ENCODE measurements at regions of chr1 and their contacts with region 1.

Region 1: DNA sequence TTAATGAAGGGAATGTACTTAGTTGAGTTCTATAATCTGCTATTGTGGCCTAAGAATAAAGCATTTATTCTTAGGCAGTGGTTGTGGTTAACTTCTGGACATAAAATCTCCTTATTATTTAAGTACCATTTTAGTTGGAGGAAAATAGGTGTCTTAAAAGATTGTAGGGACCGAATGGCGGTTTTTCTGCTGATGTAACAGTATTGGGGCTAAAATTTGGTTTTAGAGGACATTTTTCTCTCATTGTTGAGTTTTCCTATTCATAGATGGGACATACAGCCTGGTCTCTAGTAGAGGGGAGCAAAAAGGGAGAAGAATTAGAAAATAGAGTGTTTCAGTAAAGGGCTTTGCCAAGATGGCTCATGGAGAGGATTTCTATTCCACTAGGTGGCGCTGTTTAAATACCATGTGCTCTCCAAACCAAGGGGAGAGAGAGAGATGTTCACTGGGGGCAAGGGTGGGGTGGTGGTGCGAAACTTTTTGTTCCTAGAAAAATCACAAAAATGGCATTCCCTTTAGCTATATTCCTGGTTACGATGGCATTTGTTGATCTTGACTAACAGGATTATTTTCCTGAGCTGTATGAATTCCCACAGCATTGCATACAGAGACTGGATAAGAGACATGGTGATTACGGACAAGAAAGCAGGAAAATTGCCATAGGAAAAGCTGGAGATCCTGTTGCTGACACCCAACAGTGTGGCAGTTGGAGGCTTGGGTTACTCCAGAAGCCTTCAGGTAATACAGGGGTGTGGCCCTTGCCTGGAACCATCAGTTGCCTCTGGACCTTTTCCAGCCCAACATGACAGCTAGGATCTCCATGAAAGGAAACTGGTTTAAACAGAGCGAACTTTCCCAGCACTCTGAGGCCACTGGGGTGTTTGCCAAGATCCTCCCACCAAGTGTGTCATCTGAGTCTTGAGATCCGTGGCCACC is 18.2 kb upstream of the FCGR2A start:
- DNase-seq: peak in 1 of 5 donors; percentile 55
- H3K4me3 ChIP-seq: no peak overlapping the region
- H3K27ac ChIP-seq: no peak overlapping the region
- H3K4me1 ChIP-seq: no peaks in the 10 kb centered on the region
- H3K27me3 ChIP-seq: no peaks in the 10 kb centered on the region
- CTCF ChIP-seq: peak in 2 of 3 donors; percentile 21 to 27
- EP300 ChIP-seq: no peak
- POLR2A ChIP-seq: no peak

Region 2: DNA sequence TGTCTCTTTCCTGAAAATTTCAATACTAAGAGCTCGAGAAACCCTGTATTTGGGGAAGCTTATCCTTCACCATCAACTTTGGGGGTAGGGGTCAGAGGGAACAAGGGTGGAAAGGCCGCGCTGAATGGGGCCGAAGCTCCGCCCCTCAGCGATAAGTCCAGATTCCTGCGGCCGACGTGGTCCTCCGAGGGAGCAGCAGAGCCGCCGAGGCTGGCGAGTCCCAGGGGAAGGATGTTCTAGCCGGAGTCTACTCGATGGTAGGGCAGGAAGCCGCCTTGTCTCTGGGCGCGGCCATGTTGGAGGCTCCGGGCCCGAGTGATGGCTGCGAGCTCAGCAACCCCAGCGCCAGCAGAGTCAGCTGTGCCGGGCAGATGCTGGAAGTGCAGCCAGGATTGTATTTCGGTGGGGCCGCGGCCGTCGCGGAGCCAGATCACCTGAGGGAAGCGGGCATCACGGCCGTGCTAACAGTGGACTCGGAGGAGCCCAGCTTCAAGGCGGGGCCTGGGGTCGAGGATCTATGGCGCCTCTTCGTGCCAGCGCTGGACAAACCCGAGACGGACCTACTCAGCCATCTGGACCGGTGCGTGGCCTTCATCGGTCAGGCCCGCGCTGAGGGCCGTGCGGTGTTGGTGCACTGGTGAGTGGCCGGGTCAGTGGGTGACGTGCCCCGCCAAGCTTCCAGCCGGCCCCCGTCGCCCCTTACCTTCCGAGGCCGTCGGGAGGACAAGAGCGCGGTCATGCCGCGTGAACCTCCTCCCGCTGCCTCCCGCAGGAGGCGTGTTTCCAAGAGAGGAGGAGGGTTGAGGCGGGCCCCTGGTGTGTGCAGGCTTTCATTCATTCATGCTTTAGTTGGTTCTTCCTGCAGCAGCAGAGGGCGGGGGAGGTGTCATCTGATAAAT is 262.7 kb after region 1 on chr1 and contains the start of gene DUSP12:
- intact Hi-C with region 1: loop called in 1 of 4 experiments (anchors 10 kb)
- DNase-seq: peak; percentile 89 to 93 (median 90)
- H3K4me3 ChIP-seq: peak within 1 kb of the TSS; percentile 97
- H3K27ac ChIP-seq: peak within 1 kb of the TSS; percentile 42 to 70
- H3K4me1 ChIP-seq: peaks cover 7% of the 10 kb centered on the region
- H3K27me3 ChIP-seq: no peaks in the 10 kb centered on the region
- CTCF ChIP-seq: no peak
- EP300 ChIP-seq: no peak
- POLR2A ChIP-seq: peak; percentile 26
- total RNA-seq, gene DUSP12: 15.0 to 28.9 (median 19.8) TPM